H1 (cell line): ENCODE measurements at regions of chr7 and their contacts with region 1.

Region 1: DNA sequence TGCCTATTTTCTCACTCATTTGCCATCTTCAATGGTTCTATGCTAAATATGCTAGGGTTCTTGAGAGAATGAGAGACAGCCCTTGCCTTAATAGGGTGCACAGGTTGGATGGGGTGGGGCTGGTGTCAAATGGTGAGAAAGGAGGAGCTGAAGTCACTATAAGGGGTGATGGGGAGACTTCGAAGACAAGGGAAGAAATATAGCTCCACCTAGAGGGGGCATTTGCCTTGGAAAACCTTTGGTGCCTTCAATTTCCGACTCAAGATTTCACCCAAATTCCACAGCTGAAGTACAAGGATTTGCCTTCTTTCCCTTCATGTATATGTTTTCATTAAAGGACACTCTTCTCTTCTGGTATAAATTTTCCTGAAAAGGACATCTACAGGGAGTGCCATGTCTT is 5.6 kb downstream of the PTN start:
- DNase-seq: no peak
- H3K4me3 ChIP-seq: no peak overlapping the region
- H3K27ac ChIP-seq: no peak overlapping the region
- H3K4me1 ChIP-seq: peaks cover 0 to 6% (median 3%) of the 10 kb centered on the region in 4 experiments; a peak in 4 of 7 replicates
- H3K27me3 ChIP-seq: no peaks in the 10 kb centered on the region; a peak in 1 of 7 replicates
- CTCF ChIP-seq: peak in 2 of 3 experiments; percentile 60 to 71; a peak in 3 of 4 replicates
- EP300 ChIP-seq: no peak
- POLR2A ChIP-seq: no peak
- RAD21 ChIP-seq: peak; percentile 79 to 85

Region 2: DNA sequence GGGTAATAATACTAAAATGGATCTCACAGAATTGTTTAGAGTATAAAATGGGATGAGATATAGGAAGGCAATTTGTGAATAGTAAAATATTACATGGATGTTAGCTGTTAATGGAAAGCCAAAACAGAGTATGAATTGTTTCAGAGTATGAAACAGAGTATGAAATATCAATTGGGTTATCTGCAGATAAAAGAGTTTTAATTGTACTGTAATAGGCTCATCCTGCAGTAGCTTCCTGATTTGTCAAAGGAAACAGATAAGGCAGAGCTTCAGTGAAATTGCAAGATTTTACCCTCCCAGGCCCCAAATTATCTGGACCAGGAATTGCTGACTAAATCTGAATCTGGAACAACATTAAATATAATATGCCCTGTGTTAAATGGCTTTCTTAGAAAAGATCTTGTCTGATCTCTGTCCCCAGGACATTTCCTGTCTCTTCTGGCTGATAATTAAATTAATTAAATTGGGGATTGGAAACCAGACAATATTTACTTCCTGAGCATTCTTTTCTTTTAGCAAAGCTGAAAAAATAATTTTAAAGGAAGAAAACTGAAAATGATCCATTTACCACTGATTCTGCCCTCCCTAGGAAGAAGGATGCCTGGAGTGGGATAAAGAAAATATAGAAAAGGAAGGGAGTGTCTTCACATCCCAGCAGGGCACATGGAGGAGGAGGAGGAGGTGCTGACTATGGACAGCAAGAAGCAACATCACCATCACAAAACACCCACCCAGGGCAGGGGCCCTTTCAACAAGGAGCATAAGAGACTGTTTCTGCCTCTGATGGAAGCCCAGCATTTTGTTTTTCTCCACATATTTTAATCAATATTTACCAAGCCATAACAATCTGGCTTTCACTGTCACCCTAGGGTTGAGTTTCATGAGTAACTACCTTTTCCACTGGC is 12.9 kb before region 1 on chr7:
- CTCF ChIA-PET with region 1: interaction called, 10 read pairs
- POLR2A ChIA-PET with region 1: no interaction called
- DNase-seq: no peak
- H3K4me3 ChIP-seq: no peak overlapping the region
- H3K27ac ChIP-seq: no peak overlapping the region
- H3K4me1 ChIP-seq: peaks cover 0 to 5% (median 2%) of the 10 kb centered on the region in 4 experiments; a peak in 3 of 7 replicates
- H3K27me3 ChIP-seq: no peaks in the 10 kb centered on the region
- CTCF ChIP-seq: no peak
- EP300 ChIP-seq: no peak
- POLR2A ChIP-seq: no peak
- RAD21 ChIP-seq: no peak

Region 3: GRCh38 chr7:137390076-137390475 is 52.2 kb after region 1 on chr7:
- CTCF ChIA-PET with region 1: no interaction called
- POLR2A ChIA-PET with region 1: no interaction called
- DNase-seq: no peak
- H3K4me3 ChIP-seq: no peak overlapping the region
- H3K27ac ChIP-seq: no peak overlapping the region
- H3K4me1 ChIP-seq: peaks cover 0 to 5% (median 3%) of the 10 kb centered on the region in 4 experiments; a peak in 2 of 7 replicates
- H3K27me3 ChIP-seq: no peaks in the 10 kb centered on the region
- CTCF ChIP-seq: no peak
- EP300 ChIP-seq: no peak
- POLR2A ChIP-seq: no peak
- RAD21 ChIP-seq: no peak